ENCODE measurements at regions of chr2 and their contacts with region 1.

Region 1: GRCh38 chr2:24490674-24491625 is at the start of gene NCOA1:
- DNase-seq: peak; percentile 87
- H3K4me3 Mint-ChIP-seq: peak within 1 kb of the TSS; percentile 96
- H3K27ac Mint-ChIP-seq: peak within 1 kb of the TSS; percentile 95
- H3K4me1 Mint-ChIP-seq: peaks cover 43% of the 10 kb centered on the region
- H3K27me3 Mint-ChIP-seq: peaks cover 7% of the 10 kb centered on the region
- total RNA-seq, gene NCOA1: 28.7 and 30.0 TPM in 2 replicates

Region 2: GRCh38 chr2:22756276-22757043 is 1734.5 kb before region 1 on chr2:
- intact Hi-C with region 1: no loop called
- DNase-seq: no peak
- H3K4me3 Mint-ChIP-seq: no peak overlapping the region
- H3K27ac Mint-ChIP-seq: no peak overlapping the region
- H3K4me1 Mint-ChIP-seq: no peaks in the 10 kb centered on the region
- H3K27me3 Mint-ChIP-seq: no peaks in the 10 kb centered on the region

Region 3: DNA sequence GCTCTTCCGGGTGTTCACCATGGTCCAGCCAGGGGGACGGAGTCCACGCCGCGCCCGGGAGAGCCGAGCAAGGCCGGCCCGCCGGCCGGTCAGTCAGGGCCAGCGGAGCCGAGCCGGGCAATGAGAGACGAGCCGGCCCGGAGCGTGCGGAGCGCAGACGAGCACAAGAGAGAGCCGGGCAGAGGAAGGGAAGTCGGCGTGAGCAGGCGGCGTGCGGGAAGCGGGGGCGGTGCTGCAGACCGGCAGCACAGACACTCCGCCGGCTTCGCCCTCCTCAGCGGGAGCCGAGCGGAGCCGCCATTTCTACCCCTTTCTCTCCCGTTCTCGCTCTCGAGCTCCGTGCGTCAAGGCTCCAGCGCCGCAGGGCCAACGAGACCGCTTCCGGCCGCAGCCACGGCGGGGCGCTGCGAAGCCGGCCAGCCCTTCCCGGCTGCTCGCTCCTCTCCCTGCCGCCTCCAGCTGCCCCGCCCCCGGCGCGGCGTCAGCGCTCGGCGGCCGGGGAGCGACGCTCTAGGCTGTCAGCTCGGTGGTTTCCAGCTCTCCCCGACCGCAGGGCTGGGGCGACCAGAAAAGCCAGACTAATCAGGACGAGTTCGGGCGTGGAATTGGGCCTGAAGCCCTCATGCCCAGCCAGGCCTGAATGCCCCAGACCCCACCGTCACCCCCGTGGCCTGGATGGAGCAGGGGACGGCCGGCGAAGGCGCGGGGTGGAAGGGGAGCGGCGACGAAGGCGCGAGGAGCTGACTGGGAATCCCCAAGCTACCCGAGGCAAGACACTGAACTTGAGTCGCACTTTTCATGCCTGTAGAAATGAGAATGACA is 564.0 kb before region 1 on chr2 and contains the start of gene ATAD2B:
- intact Hi-C with region 1: loop called (anchors 2 kb)
- DNase-seq: peak; percentile 93
- H3K4me3 Mint-ChIP-seq: peak within 1 kb of the TSS; percentile 95
- H3K27ac Mint-ChIP-seq: peak within 1 kb of the TSS; percentile 99
- H3K4me1 Mint-ChIP-seq: peaks cover 40% of the 10 kb centered on the region
- H3K27me3 Mint-ChIP-seq: peaks cover 2% of the 10 kb centered on the region
- total RNA-seq, gene ATAD2B: 25.9 and 27.8 TPM in 2 replicates

Region 4: DNA sequence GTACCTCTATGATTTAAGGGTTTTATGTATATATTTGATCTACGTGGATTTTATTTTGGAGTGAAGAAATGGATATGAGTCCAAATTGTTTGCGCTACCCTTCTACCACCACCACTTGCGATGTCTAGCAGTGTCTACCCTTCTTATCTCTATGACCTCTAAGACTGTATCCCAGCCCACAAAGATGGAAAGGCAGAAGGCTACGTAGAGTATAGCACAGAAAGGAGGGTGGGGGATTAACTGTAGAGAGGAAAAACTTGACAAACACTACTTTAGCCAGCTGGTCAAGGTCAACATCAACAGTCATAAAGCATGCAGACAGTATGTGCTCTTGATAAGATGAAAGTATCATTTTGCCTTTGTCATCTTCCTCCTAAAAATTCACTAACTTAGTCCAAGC is 145.0 kb before region 1 on chr2:
- intact Hi-C with region 1: no loop called
- DNase-seq: no peak
- H3K4me3 Mint-ChIP-seq: no peak overlapping the region
- H3K27ac Mint-ChIP-seq: no peak overlapping the region
- H3K4me1 Mint-ChIP-seq: peaks cover 23% of the 10 kb centered on the region
- H3K27me3 Mint-ChIP-seq: no peaks in the 10 kb centered on the region

Region 5: GRCh38 chr2:24360050-24360962 is 130.6 kb before region 1 on chr2 and contains the start of gene ITSN2:
- intact Hi-C with region 1: loop called (anchors 2 kb)
- DNase-seq: peak; percentile 81
- H3K4me3 Mint-ChIP-seq: peak within 1 kb of the TSS; percentile 91
- H3K27ac Mint-ChIP-seq: peak within 1 kb of the TSS; percentile 93
- H3K4me1 Mint-ChIP-seq: peaks cover 29% of the 10 kb centered on the region
- H3K27me3 Mint-ChIP-seq: no peaks in the 10 kb centered on the region
- total RNA-seq, gene ITSN2: 52.9 and 57.1 TPM in 2 replicates

Region 6: DNA sequence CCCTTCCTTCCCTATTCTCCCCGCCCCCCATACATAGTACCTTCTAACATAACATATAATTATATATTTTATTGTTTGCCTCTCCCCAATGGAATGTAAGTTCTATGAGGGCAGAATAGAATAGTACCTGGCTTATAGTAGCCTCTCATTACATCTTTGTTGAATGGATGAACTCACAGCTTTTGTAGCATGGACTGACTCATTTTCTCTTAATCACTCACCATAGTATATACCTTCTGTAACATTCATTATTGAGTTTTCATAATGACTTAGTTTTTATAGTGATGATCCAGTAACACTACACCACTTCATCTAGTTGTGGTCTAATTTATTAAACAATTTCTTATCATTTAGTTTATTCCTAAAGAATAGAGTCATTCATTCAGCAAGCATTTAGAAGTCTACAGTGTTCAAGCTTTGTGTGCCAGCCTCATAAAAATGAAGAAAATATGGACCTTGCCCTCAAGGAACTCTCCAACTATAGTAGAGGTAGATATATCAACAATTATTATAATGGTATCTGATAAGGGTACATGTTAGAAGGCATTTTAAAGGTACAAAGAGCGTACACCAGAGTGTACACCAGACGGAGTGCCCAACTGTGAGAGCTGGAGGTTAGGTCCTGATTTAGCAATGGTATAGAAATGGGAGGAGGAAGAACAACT is 31.2 kb after region 1 on chr2:
- intact Hi-C with region 1: loop called (anchors 1 kb)
- DNase-seq: no peak
- H3K4me3 Mint-ChIP-seq: peak overlapping the region; percentile 49
- H3K27ac Mint-ChIP-seq: peak overlapping the region; percentile 62
- H3K4me1 Mint-ChIP-seq: peaks cover 31% of the 10 kb centered on the region
- H3K27me3 Mint-ChIP-seq: no peaks in the 10 kb centered on the region

Region 7: GRCh38 chr2:24702800-24703199 is 211.8 kb after region 1 on chr2:
- intact Hi-C with region 1: loop called (anchors 10 kb)
- DNase-seq: no peak
- H3K4me3 Mint-ChIP-seq: no peak overlapping the region
- H3K27ac Mint-ChIP-seq: peak overlapping the region; percentile 4
- H3K4me1 Mint-ChIP-seq: peaks cover 5% of the 10 kb centered on the region
- H3K27me3 Mint-ChIP-seq: no peaks in the 10 kb centered on the region

Region 8: DNA sequence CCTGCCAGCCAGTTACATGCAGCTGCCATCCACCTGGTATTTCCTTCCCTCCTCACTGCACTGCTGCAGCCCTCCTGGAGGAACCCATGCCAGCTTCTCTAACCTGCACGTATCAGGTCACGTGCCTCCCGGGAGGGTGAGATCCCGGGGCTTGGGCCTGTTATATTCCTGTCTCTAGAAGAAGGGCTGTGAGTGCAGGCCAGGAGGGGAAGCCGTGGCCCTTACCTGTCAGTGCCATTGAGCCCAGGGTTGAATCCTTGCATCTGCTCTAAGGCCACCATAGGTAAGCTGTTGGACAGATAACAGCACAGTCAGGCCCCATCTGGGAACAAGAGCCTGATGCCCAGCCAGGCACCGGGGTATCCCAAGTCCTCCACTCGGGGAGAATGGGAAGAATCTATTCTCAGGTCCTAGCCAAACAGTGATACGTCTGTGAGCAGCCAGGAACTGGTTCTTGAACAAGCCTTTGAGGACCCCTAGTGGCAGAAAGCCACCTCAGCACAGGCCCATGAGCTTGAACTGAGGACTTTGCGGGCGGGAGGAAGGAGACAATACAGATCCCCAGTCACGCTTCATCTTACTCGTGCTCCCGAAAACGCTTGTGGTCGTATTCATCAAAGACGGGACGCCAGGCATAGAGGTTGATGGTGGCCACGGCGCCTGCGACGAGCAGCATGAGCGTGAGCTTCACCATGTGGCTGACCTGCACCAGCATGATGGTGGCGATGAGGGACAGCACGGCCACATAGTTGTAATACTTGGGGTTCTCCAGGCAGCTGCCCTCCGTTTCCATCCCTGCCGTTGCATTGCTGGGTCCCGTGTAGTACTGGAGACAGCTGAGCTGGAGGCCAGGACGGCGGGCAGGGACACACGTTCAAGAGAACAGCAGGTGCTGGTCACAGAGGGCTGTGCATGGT is 336.6 kb after region 1 on chr2:
- intact Hi-C with region 1: loop called (anchors 1 kb)
- DNase-seq: peak; percentile 65
- H3K4me3 Mint-ChIP-seq: no peak overlapping the region
- H3K27ac Mint-ChIP-seq: peak overlapping the region; percentile 86
- H3K4me1 Mint-ChIP-seq: peaks cover 25% of the 10 kb centered on the region
- H3K27me3 Mint-ChIP-seq: no peaks in the 10 kb centered on the region

Region 9: GRCh38 chr2:24971536-24972314 is 480.8 kb after region 1 on chr2 and contains the start of gene DNAJC27:
- intact Hi-C with region 1: loop called (anchors 1 kb)
- DNase-seq: peak; percentile 96
- H3K4me3 Mint-ChIP-seq: peak within 1 kb of the TSS; percentile 96
- H3K27ac Mint-ChIP-seq: peak within 1 kb of the TSS; percentile 100
- H3K4me1 Mint-ChIP-seq: peaks cover 19% of the 10 kb centered on the region
- H3K27me3 Mint-ChIP-seq: no peaks in the 10 kb centered on the region
- total RNA-seq, gene DNAJC27: 6.3 and 7.0 TPM in 2 replicates